Activated B cell treated with CpG ODN at 0.5 μM for 24 hours (primary cell): ENCODE measurements at regions of chr14 and their contacts with region 1.

Region 1: DNA sequence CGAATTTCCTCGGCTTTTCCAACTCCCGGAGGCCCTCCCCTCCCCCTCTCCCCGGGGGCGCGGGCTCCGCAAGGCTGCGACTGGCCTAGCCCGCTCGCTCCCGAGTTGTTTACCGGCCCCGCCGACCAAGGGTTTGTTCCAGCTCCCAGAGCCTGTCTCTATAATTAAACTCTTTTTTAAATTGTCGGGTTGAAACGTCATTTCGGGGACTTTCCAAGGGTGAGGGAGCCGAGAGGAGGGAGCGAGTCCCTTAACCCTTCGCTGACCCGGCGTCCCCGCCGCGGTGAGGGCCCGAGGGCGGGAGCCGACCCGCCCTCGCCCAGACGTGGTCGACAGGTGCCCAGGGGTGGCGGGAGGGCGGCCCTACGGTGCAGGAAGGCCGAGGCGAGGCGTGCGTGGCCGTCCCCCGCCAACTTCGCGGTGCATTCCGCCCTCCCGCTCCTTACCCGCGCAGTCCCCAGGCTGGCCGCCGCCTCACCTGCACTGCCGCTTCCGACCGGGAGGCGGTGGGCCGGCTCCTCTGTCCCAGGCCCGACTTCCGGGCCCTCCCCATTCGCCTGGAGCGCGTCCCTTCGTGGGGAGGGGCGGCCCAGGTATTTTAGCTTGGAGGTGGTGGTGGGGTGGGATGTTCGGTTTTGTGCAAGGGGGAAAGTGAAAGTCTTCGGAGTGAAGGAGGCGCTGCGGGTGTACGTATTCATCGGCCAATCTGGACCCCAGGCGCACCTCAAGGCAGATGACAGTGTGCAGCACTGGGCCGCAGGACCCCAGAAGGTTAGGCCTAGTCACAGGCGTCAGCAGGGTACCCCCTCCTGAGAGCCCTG is 2.9 kb upstream of the ZFP36L1 start:
- DNase-seq: peak; percentile 83
- ATAC-seq: peak; percentile 41
- H3K4me3 Mint-ChIP-seq: peak overlapping the region; percentile 100
- H3K27ac Mint-ChIP-seq: peak overlapping the region; percentile 99
- H3K4me1 Mint-ChIP-seq: peaks cover 48% of the 10 kb centered on the region
- H3K27me3 Mint-ChIP-seq: no peaks in the 10 kb centered on the region
- CTCF ChIP-seq: no peak

Region 2: DNA sequence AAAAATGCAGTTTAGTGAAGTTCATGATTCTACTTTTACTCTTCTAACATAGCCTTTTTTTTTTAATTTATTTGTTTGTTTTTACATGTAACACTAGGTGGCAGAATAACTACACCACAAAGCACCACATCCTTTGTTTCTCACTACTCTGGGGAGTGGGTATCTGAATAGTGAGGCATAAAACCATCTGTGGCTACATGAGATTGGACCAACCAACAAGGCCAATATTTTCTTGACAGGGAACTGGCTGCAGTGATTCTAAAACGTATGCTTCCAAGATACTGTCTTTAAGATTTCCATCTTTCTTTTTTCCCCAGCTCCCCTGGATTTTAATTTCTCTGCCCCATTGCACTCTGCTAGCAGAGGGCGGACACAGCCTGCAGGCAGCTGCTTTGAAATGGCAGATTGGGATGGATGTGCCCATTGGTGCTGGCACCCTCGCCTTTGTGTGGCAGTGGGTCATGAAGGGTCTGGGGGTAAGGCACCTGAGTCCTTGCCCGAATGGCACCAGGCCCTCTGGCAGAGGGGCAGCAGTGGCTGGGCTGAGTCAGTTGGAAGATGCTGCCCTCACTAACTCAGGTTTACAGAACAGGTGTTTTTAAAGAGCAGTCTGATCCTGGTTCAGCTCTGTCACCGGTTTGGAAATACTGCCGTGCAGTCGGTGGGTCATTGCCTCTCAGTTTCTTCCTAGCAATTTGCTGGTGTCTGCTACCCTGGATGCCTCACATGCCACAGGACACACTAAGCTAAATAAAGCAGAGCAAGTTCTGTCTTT is 547.1 kb before region 1 on chr14:
- CTCF ChIA-PET with region 1: interaction called, 79 read pairs
- POLR2A ChIA-PET with region 1: interaction called, 522 read pairs
- intact Hi-C with region 1: loop called (anchors 1 kb)
- DNase-seq: peak; percentile 34
- ATAC-seq: peak; percentile 77
- H3K4me3 Mint-ChIP-seq: peak overlapping the region; percentile 19
- H3K27ac Mint-ChIP-seq: peak overlapping the region; percentile 90
- H3K4me1 Mint-ChIP-seq: peaks cover 72% of the 10 kb centered on the region
- H3K27me3 Mint-ChIP-seq: no peaks in the 10 kb centered on the region
- CTCF ChIP-seq: no peak

Region 3: DNA sequence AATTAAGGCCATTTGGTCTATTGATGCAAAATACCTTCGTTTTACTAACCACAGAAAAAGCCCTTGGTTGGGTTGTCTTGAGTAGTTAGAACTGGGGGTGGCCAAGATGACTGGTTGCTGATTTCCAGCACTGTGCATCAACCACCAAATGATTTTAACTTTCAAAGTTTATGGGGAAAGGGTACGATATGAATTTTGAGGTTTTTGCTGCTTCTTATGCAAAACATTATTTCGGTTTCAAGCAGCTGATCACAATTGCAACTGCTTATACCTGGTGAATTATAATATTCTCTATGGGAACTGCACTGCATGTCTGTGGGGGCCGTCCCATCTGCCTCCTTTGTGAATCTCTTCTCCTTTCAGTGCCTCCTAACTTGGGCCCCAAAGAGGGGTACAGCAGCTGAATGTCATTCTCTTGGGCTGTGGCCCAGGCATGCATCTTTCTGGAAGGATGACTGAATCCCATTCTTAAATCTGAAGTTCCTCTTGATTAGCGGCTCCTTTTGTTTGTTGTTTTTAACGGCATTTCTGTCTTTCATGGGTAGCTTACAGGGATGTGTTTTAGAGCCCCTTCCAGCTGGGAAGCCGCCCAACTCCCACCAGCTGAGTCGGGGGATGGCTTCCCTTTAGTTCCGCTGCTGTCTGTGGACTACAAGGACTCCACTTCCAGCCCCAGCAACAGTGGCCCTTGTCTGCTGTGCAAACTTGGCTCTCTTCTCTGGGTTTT is 482.8 kb before region 1 on chr14:
- CTCF ChIA-PET with region 1: no interaction called
- POLR2A ChIA-PET with region 1: interaction called, 43 read pairs
- intact Hi-C with region 1: loop called (anchors 1 kb)
- DNase-seq: no peak
- ATAC-seq: peak; percentile 84
- H3K4me3 Mint-ChIP-seq: peak overlapping the region; percentile 62
- H3K27ac Mint-ChIP-seq: peak overlapping the region; percentile 94
- H3K4me1 Mint-ChIP-seq: peaks cover 91% of the 10 kb centered on the region
- H3K27me3 Mint-ChIP-seq: no peaks in the 10 kb centered on the region
- CTCF ChIP-seq: no peak

Region 4: DNA sequence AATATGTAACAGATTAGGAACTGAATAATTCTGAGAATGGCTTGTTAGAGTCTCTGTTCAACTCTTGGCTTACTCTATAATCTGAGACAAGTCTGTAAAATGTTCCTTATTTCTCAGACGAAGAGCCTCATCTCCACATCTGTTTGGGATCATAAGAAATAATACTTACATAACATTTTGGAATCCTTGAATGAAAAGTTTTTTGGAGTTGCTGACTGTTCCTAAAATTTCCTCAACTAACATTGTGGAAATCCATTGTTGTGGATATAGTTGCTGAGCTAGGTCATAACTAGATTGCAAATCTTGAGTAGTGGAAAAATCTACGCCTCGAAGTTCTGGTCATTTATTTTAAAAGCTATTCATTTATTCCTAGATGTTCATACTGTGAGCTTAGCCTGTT is 405.9 kb before region 1 on chr14:
- CTCF ChIA-PET with region 1: no interaction called
- POLR2A ChIA-PET with region 1: no interaction called
- intact Hi-C with region 1: no loop called
- DNase-seq: no peak
- ATAC-seq: no peak
- H3K4me3 Mint-ChIP-seq: no peak overlapping the region
- H3K27ac Mint-ChIP-seq: no peak overlapping the region
- H3K4me1 Mint-ChIP-seq: peaks cover 41% of the 10 kb centered on the region
- H3K27me3 Mint-ChIP-seq: no peaks in the 10 kb centered on the region
- CTCF ChIP-seq: no peak

Region 5: DNA sequence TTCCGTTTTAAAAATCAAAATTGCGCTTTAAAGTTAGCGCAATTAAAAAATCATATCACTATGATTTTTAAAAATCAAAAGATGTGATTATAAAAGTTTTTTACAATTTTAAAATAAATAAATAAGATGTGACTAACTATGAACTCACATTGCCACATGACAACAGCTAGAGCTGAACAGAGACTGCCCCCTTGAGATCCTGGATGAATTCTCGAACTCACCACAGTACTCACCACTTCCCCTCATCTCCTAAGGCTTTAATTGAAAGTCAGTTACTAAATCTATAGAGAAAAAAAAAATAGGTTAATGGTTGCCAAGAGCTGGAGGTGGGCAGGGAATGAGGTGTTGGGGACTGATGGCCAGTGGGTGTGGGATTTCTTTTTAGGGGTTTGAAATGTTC is 387.1 kb before region 1 on chr14:
- CTCF ChIA-PET with region 1: interaction called, 3 read pairs
- POLR2A ChIA-PET with region 1: interaction called, 350 read pairs
- intact Hi-C with region 1: loop called (anchors 1 kb)
- DNase-seq: no peak
- ATAC-seq: peak; percentile 53
- H3K4me3 Mint-ChIP-seq: peak overlapping the region; percentile 16
- H3K27ac Mint-ChIP-seq: peak overlapping the region; percentile 80
- H3K4me1 Mint-ChIP-seq: peaks cover 75% of the 10 kb centered on the region
- H3K27me3 Mint-ChIP-seq: no peaks in the 10 kb centered on the region
- CTCF ChIP-seq: no peak

Region 6: GRCh38 chr14:68506021-68506644 is 289.7 kb before region 1 on chr14:
- CTCF ChIA-PET with region 1: no interaction called
- POLR2A ChIA-PET with region 1: interaction called, 585 read pairs
- intact Hi-C with region 1: loop called (anchors 1 kb)
- DNase-seq: no peak
- ATAC-seq: peak; percentile 10
- H3K4me3 Mint-ChIP-seq: peak overlapping the region; percentile 62
- H3K27ac Mint-ChIP-seq: peak overlapping the region; percentile 98
- H3K4me1 Mint-ChIP-seq: peaks cover 87% of the 10 kb centered on the region
- H3K27me3 Mint-ChIP-seq: no peaks in the 10 kb centered on the region
- CTCF ChIP-seq: no peak

Region 7: GRCh38 chr14:68695326-68695768 is 100.5 kb before region 1 on chr14:
- CTCF ChIA-PET with region 1: no interaction called
- POLR2A ChIA-PET with region 1: interaction called, 604 read pairs
- intact Hi-C with region 1: no loop called
- DNase-seq: no peak
- ATAC-seq: peak; percentile 81
- H3K4me3 Mint-ChIP-seq: peak overlapping the region; percentile 42
- H3K27ac Mint-ChIP-seq: peak overlapping the region; percentile 43
- H3K4me1 Mint-ChIP-seq: peaks cover 46% of the 10 kb centered on the region
- H3K27me3 Mint-ChIP-seq: no peaks in the 10 kb centered on the region
- CTCF ChIP-seq: no peak